Natural killer cell (primary cell): ENCODE measurements at regions of chr2 and their contacts with region 1.

Region 1: GRCh38 chr2:26785431-26786206 is at the start of gene CENPA:
- DNase-seq: peak; percentile 92 to 99
- ATAC-seq: peak; percentile 98 to 100 (median 99)
- H3K4me3 ChIP-seq: peak within 1 kb of the TSS; percentile 58
- H3K4me3 Mint-ChIP-seq: peak within 1 kb of the TSS; percentile 87
- H3K27ac ChIP-seq: peak within 1 kb of the TSS; percentile 63
- H3K27ac Mint-ChIP-seq: peak within 1 kb of the TSS; percentile 78 to 80
- H3K4me1 ChIP-seq: peaks cover 12% of the 10 kb centered on the region
- H3K4me1 Mint-ChIP-seq: peaks cover 5 to 13% of the 10 kb centered on the region in 2 donors
- H3K27me3 ChIP-seq: no peaks in the 10 kb centered on the region
- H3K27me3 Mint-ChIP-seq: no peaks in the 10 kb centered on the region
- CTCF ChIP-seq: no peak
- total RNA-seq, gene CENPA: 0.38 to 0.52 (median 0.50) TPM

Region 2: GRCh38 chr2:26764078-26764887 is 21.3 kb before region 1 on chr2 and contains the start of gene SLC35F6:
- intact Hi-C with region 1: loop called (anchors 1 kb)
- DNase-seq: peak; percentile 85 to 93
- ATAC-seq: peak; percentile 93 to 94 (median 93)
- H3K4me3 ChIP-seq: peak within 1 kb of the TSS; percentile 68
- H3K4me3 Mint-ChIP-seq: peak within 1 kb of the TSS; percentile 97
- H3K27ac ChIP-seq: peak within 1 kb of the TSS; percentile 78
- H3K27ac Mint-ChIP-seq: peak within 1 kb of the TSS; percentile 89 to 93
- H3K4me1 ChIP-seq: peaks cover 53% of the 10 kb centered on the region
- H3K4me1 Mint-ChIP-seq: peaks cover 27 to 38% of the 10 kb centered on the region in 2 donors
- H3K27me3 ChIP-seq: no peaks in the 10 kb centered on the region
- H3K27me3 Mint-ChIP-seq: no peaks in the 10 kb centered on the region
- CTCF ChIP-seq: no peak
- total RNA-seq, gene SLC35F6: 30.0 to 35.6 (median 30.4) TPM

Region 3: GRCh38 chr2:26870585-26871095 is 85.0 kb after region 1 on chr2:
- intact Hi-C with region 1: no loop called
- DNase-seq: no peak
- ATAC-seq: no peak
- H3K4me3 ChIP-seq: no peak overlapping the region
- H3K4me3 Mint-ChIP-seq: no peak overlapping the region
- H3K27ac ChIP-seq: no peak overlapping the region
- H3K27ac Mint-ChIP-seq: no peak overlapping the region
- H3K4me1 ChIP-seq: no peaks in the 10 kb centered on the region
- H3K4me1 Mint-ChIP-seq: no peaks in the 10 kb centered on the region
- H3K27me3 ChIP-seq: no peaks in the 10 kb centered on the region
- H3K27me3 Mint-ChIP-seq: peaks cover 12 to 19% of the 10 kb centered on the region in 2 donors
- CTCF ChIP-seq: no peak